Activated B cell treated with CpG ODN at 0.5 μM for 24 hours (primary cell): ENCODE measurements at regions of chr10 and their contacts with region 1.

Region 1: GRCh38 chr10:6050801-6051445 is 11.2 kb downstream of the IL2RA start:
- DNase-seq: peak; percentile 79
- ATAC-seq: peak; percentile 66
- H3K4me3 Mint-ChIP-seq: peak overlapping the region; percentile 81
- H3K27ac Mint-ChIP-seq: peak overlapping the region; percentile 97
- H3K4me1 Mint-ChIP-seq: peaks cover 91% of the 10 kb centered on the region
- H3K27me3 Mint-ChIP-seq: no peaks in the 10 kb centered on the region
- CTCF ChIP-seq: no peak

Region 2: DNA sequence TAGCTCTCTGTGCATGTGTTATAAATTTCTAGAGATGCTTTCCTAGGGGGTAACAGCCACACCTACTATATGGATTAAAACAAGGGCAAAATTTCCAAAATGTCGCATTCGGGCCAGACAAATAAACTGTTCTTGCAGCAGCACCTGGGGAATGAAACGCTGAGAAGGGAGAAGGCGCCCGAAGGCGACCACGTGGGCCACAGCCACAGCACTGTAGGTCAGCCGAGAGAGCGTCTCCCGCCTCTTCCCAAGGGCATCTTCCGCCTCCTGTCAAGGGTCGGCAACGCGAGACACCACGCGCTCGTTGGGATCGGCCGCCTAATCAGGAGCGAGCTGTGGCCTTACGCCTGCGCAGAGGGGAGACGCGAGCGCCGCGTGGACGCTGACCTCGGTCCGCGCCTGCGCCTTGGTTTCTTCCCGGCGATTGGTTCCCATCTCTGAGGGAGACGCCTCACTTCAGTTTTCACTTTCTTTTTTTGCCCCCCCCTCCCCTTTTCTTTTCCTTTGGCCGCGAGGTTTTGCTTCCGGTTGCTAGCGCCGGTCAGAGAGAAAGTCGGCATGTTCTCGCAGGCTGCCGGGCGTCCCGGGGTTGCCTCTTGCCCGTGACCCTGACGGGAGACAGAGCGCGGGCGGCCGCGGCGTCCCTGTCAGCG is 366.5 kb before region 1 on chr10 and contains the start of gene TASOR2:
- CTCF ChIA-PET with region 1: no interaction called
- POLR2A ChIA-PET with region 1: no interaction called
- intact Hi-C with region 1: loop called (anchors 2 kb)
- DNase-seq: peak; percentile 94
- ATAC-seq: peak; percentile 83
- H3K4me3 Mint-ChIP-seq: peak within 1 kb of the TSS; percentile 99
- H3K27ac Mint-ChIP-seq: peak within 1 kb of the TSS; percentile 94
- H3K4me1 Mint-ChIP-seq: peaks cover 44% of the 10 kb centered on the region
- H3K27me3 Mint-ChIP-seq: no peaks in the 10 kb centered on the region
- CTCF ChIP-seq: no peak
- total RNA-seq, gene TASOR2: 69.8 and 81.4 TPM in 2 replicates

Region 3: DNA sequence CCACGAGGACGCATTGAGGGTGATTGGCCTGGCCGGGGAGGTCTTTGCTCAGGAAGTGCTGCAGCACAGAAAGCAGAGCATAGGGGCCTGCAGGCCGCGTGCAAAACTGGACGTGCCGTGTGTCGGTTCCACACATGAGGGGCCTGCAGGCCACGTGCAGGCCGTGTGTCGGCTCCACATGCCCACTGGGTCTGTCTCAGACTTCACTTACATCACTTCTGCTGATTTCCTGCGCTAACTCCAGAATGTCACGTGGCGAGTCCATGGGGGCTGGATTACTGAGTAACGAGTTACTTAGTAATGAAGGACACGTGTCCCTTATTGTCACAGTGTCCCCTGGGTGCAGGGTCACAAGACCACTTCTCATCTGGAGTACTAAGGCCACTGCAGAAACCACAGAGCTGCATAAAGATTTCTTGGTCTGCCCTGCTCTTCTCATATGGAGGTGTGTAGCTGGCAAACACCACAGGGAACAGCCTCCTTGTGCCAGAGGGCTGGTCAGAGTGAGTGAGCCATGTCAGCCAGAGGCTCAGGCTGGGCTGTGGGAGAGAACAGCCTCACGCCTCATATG is 298.5 kb before region 1 on chr10:
- CTCF ChIA-PET with region 1: no interaction called
- POLR2A ChIA-PET with region 1: no interaction called
- intact Hi-C with region 1: no loop called
- DNase-seq: no peak
- ATAC-seq: no peak
- H3K4me3 Mint-ChIP-seq: no peak overlapping the region
- H3K27ac Mint-ChIP-seq: no peak overlapping the region
- H3K4me1 Mint-ChIP-seq: no peaks in the 10 kb centered on the region
- H3K27me3 Mint-ChIP-seq: no peaks in the 10 kb centered on the region
- CTCF ChIP-seq: no peak

Region 4: DNA sequence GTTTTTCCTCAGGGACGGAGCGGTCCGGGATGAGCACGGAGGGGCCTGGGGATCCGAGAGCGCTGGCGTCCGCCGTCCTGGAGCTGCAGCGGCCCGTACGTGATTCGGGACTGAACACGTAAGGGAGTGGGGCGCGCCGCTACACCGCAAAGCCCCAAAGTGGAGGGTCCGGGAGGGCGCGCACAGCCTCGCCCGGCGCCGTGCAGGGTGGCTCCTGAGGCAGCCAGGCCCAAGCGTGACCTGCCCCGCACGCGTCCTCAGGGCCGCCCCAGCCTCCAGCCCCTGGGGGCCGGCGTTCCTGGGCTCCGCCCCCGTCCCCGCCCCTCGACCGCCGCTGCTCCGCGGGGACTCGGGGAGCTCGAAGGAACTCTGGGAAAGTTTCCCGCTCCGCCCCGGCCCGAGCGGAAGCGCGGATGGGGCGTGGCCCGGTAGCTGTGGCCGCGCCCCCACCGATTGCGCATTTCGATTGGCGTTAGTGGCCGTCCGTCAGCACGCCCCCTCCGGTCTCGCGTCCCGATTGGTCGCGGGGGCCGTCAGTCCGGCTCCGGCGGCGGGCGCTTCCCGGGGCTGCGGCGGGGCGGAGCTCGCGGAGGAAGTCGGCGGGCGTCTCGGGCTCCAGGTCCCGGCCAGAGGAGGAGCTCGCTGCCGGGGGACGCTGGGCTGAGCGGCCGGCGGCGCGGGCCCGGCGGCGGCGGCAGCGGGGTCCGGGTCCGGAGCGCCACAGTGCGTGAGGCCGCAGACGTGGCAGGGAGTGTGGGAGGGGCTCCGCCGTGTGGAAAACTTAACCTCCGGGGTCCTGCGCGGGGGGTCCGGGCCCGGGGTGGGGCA is 161.1 kb before region 1 on chr10 and contains the starts of genes ANKRD16 and FBH1:
- CTCF ChIA-PET with region 1: no interaction called
- POLR2A ChIA-PET with region 1: interaction called, 20 read pairs
- intact Hi-C with region 1: no loop called
- DNase-seq: peak; percentile 100
- ATAC-seq: peak; percentile 85
- H3K4me3 Mint-ChIP-seq: peak within 1 kb of the TSS; percentile 87
- H3K27ac Mint-ChIP-seq: peak within 1 kb of the TSS; percentile 78
- H3K4me1 Mint-ChIP-seq: peaks cover 59% of the 10 kb centered on the region
- H3K27me3 Mint-ChIP-seq: no peaks in the 10 kb centered on the region
- CTCF ChIP-seq: no peak
- total RNA-seq, gene ANKRD16: 9.2 and 11.1 TPM in 2 replicates
- total RNA-seq, gene FBH1: 65.5 and 68.7 TPM in 2 replicates

Region 5: DNA sequence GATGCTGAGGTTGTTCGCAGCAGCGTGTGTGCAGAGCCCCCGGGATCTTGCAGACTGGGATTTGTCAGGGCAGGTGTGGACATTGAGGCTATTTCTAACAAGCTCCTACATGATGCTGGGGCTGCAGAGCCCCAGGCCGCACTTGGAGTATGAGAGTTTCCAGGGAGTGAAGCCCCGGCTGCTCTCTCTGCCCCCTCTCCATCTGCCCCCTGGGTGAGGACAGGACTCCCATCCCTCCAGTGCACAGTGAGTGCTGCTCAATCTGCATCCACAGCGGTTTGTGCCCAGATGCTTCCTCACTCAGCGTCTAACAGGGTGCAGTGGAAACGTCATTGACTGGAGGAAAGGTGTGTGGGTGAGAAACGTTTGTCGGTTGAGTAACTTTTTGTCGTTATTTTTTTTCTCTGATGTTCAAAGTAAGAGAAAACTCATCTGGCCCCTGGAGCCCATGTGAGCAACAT is 14.0 kb before region 1 on chr10:
- CTCF ChIA-PET with region 1: no interaction called
- POLR2A ChIA-PET with region 1: interaction called, 24 read pairs
- intact Hi-C with region 1: loop called (anchors 2 kb)
- DNase-seq: no peak
- ATAC-seq: peak; percentile 66
- H3K4me3 Mint-ChIP-seq: peak overlapping the region; percentile 24
- H3K27ac Mint-ChIP-seq: peak overlapping the region; percentile 70
- H3K4me1 Mint-ChIP-seq: peaks cover 57% of the 10 kb centered on the region
- H3K27me3 Mint-ChIP-seq: no peaks in the 10 kb centered on the region
- CTCF ChIP-seq: no peak

Region 6: DNA sequence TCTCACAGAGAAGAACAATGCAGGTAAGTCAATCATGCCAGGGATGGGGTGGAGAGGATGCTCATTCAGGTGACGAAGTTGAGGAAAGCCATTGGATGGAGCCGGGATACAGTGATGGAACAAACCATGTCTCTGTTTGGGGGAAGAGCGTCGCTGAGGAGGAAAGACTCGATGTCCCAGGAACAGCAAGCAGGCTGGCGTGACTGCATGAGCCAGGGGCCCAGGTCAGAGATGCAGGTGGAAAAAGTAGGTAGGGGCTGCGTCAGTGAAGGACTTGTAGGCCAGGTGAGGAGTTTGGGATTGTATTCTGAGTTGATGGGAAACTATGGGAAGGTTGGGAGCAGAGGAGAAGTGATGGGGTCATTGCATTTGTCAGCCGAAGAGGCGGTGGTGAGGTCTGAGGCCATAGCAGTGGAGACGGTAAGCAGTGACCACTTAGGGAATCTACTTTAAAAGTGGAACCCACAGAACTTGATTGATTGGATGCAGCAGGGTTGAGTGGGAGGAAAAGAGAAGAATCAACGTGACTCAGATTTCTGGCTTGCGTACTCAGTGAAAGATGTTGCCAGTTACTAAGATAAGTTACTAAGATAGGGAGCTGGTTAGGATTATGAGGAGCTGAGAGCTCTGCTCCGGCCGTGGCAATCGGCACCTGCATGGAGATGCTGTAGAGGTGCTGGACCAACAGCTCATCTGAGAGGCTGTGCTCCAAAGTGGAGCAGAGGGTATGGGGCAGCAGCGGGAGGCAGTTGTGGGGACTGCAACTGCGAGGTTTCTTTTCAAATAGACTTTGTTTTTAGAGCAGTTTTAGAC is 23.8 kb after region 1 on chr10:
- CTCF ChIA-PET with region 1: interaction called, 5 read pairs
- POLR2A ChIA-PET with region 1: interaction called, 339 read pairs
- intact Hi-C with region 1: loop called (anchors 1 kb)
- DNase-seq: no peak
- ATAC-seq: no peak
- H3K4me3 Mint-ChIP-seq: no peak overlapping the region
- H3K27ac Mint-ChIP-seq: no peak overlapping the region
- H3K4me1 Mint-ChIP-seq: peaks cover 50% of the 10 kb centered on the region
- H3K27me3 Mint-ChIP-seq: no peaks in the 10 kb centered on the region
- CTCF ChIP-seq: no peak

Region 7: DNA sequence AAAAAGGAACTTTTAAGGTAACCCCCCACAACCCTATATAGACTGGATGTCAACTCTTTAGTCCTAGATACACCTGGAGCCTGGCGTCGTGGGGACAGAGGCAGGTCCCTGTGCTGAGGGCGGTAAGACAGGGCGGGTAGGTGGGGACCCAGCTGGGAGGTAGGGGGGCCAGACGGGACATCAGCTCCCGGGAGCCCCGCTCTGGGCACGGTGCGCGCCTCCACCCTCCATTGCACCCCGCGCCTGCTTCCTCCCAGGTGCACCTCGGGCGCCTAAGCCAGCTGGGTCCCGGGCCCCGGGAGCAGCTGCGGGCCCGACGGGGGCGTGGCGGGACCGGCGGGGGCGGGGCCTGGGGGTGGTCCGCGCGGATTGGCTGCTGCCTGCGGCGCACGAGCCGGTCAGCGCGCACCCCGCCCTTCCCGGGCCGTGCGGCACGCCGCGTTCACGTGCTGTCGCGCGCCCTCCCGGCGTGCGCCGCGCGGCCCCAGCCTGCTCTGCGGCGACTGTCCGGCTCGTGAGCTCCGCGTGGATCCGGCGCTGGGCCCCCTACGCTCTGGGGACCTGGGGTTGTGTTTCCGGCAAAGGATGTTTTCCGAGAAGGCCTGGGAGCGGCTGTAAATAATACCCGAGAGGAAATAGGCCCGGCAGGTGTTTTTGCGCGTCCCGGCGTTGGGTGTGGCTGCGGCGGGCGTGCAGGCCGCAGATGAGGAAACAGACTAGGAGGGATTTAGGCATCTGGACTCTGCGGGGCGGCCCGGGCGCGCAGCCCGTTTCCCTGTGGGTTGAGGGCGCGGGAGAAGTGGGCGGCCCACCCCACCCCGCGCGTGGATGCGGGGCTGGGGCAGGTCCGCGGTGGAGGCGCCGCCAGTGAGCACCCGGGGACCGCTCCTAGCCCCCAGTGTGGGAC is 112.7 kb after region 1 on chr10:
- CTCF ChIA-PET with region 1: no interaction called
- POLR2A ChIA-PET with region 1: interaction called, 4 read pairs
- intact Hi-C with region 1: loop called (anchors 5 kb)
- DNase-seq: peak; percentile 90
- ATAC-seq: peak; percentile 98
- H3K4me3 Mint-ChIP-seq: peak overlapping the region; percentile 96
- H3K27ac Mint-ChIP-seq: peak overlapping the region; percentile 97
- H3K4me1 Mint-ChIP-seq: peaks cover 34% of the 10 kb centered on the region
- H3K27me3 Mint-ChIP-seq: no peaks in the 10 kb centered on the region
- CTCF ChIP-seq: no peak

Region 8: GRCh38 chr10:7471720-7472367 is 1420.9 kb after region 1 on chr10:
- CTCF ChIA-PET with region 1: no interaction called
- POLR2A ChIA-PET with region 1: no interaction called
- intact Hi-C with region 1: loop called (anchors 5 kb)
- DNase-seq: peak; percentile 59
- ATAC-seq: peak; percentile 89
- H3K4me3 Mint-ChIP-seq: peak overlapping the region; percentile 73
- H3K27ac Mint-ChIP-seq: peak overlapping the region; percentile 90
- H3K4me1 Mint-ChIP-seq: peaks cover 78% of the 10 kb centered on the region
- H3K27me3 Mint-ChIP-seq: no peaks in the 10 kb centered on the region
- CTCF ChIP-seq: no peak